ENCODE measurements at regions of chr16 and their contacts with region 1.

Region 1: GRCh38 chr16:76639685-76640289 is 362.6 kb downstream of the CNTNAP4 start:
- DNase-seq: peak; percentile 47
- ATAC-seq: peak; percentile 94
- H3K4me3 ChIP-seq: no peak overlapping the region
- H3K27ac ChIP-seq: no peak overlapping the region
- H3K4me1 ChIP-seq: no peaks in the 10 kb centered on the region
- H3K27me3 ChIP-seq: no peaks in the 10 kb centered on the region
- CTCF ChIP-seq: peak; percentile 69
- EP300 ChIP-seq: no peak
- POLR2A ChIP-seq: no peak
- RAD21 ChIP-seq: no peak

Region 2: DNA sequence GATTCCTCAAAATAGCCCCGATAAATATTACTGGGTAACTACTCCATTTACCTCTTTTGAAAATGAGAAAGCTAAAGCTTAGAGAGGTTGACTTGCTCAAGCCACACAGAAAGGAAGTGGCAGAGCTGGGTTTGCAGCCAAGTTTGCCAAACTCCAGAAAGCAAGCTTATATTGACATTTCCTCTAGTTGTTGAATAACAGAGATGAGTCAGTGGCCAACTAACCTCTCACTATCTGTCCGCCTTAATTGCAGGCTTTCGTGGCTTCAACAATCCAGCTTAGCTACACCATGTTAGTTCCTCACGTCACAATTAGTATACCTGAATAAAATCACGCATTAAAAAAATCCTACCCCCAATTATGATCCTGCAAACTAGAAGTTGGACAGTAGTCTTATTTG is 210.9 kb before region 1 on chr16:
- CTCF ChIA-PET with region 1: no interaction called
- POLR2A ChIA-PET with region 1: no interaction called
- in situ Hi-C with region 1: no loop called
- intact Hi-C with region 1: loop called (anchors 5 kb)
- DNase-seq: peak; percentile 42
- ATAC-seq: peak; percentile 87
- H3K4me3 ChIP-seq: no peak overlapping the region
- H3K27ac ChIP-seq: no peak overlapping the region
- H3K4me1 ChIP-seq: peaks cover 7% of the 10 kb centered on the region; the same call in 1 of the 2 replicates
- H3K27me3 ChIP-seq: no peaks in the 10 kb centered on the region; a peak in 1 of 5 replicates
- CTCF ChIP-seq: no peak
- EP300 ChIP-seq: no peak
- POLR2A ChIP-seq: no peak
- RAD21 ChIP-seq: no peak

Region 3: DNA sequence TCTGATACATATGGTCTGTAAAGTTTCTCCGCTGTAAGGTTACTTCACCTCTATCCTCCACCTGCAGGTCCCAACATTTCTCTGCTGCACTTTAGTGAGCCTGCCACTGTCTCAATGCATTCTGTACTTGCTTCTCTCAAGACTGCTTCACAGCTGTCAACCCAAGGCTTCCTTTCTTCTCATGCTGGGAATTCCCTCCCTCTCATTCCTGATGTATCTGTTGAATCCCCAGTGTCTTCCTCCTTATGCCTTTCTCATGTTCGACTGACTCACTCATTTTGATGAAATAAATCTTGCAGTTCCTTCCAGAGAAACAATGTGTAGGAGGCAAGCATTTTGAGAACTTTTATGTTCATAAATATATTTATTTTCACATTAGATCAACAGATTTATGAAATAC is 74.2 kb before region 1 on chr16:
- CTCF ChIA-PET with region 1: no interaction called
- POLR2A ChIA-PET with region 1: no interaction called
- in situ Hi-C with region 1: no loop called
- intact Hi-C with region 1: no loop called
- DNase-seq: no peak
- ATAC-seq: no peak
- H3K4me3 ChIP-seq: no peak overlapping the region
- H3K27ac ChIP-seq: no peak overlapping the region
- H3K4me1 ChIP-seq: no peaks in the 10 kb centered on the region
- H3K27me3 ChIP-seq: no peaks in the 10 kb centered on the region
- CTCF ChIP-seq: no peak
- EP300 ChIP-seq: no peak
- POLR2A ChIP-seq: no peak
- RAD21 ChIP-seq: no peak

Region 4: DNA sequence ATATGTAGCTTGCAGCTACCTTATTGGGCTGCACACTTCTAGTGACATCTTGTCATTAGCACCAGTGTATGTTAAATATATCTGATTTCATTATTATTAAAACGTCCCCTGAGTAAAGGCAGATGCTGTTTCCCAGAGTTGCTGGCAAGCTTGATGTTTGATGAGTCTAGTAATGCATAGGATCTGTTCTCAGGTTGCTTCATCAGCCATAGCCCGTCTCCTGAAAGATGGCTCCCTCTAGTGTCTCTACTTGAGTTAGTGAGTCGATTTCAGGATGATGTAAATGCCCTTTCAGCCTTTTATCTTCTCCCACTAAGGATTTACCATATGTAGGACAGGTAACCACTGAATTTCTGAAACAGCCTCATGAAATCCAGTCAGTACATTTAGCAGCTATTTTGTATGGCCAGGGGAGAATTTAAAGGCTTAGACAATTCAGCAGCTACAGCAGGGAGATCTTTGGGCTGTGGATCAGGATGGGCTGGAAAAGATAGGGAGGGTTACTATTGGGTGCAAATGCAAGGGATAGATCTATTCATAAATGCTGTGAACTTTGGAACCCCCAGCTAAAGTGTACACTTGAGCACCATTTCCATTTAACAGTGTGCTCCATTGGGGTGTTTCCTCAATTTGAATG is 13.7 kb after region 1 on chr16:
- CTCF ChIA-PET with region 1: no interaction called
- POLR2A ChIA-PET with region 1: no interaction called
- in situ Hi-C with region 1: no loop called
- intact Hi-C with region 1: no loop called
- DNase-seq: peak; percentile 71
- ATAC-seq: peak; percentile 96
- H3K4me3 ChIP-seq: no peak overlapping the region
- H3K27ac ChIP-seq: no peak overlapping the region
- H3K4me1 ChIP-seq: peaks cover 7% of the 10 kb centered on the region
- H3K27me3 ChIP-seq: no peaks in the 10 kb centered on the region
- CTCF ChIP-seq: peak; percentile 85
- EP300 ChIP-seq: no peak
- POLR2A ChIP-seq: no peak
- RAD21 ChIP-seq: peak; percentile 77